Heart right ventricle (tissue), 16 donors: ENCODE measurements at regions of chr1 and their contacts with region 1.

Region 1: GRCh38 chr1:202105539-202106276 is 17.0 kb upstream of the GPR37L1 start:
- DNase-seq: peak in 1 of 2 donors; percentile 18
- ATAC-seq: no peak
- H3K4me3 ChIP-seq: no peak overlapping the region
- H3K27ac ChIP-seq: peak overlapping the region in 1 of 10 donors; percentile 90
- H3K4me1 ChIP-seq: peaks cover 0 to 31% (median 20%) of the 10 kb centered on the region in 9 donors
- H3K27me3 ChIP-seq: no peaks in the 10 kb centered on the region
- CTCF ChIP-seq: no peak

Region 2: GRCh38 chr1:201870397-201870796 is 235.3 kb before region 1 on chr1:
- intact Hi-C with region 1: no loop called
- DNase-seq: no peak
- ATAC-seq: no peak
- H3K4me3 ChIP-seq: no peak overlapping the region
- H3K27ac ChIP-seq: no peak overlapping the region
- H3K4me1 ChIP-seq: peaks cover 0 to 4% (median 0%) of the 10 kb centered on the region in 9 donors
- H3K27me3 ChIP-seq: no peaks in the 10 kb centered on the region
- CTCF ChIP-seq: no peak

Region 3: DNA sequence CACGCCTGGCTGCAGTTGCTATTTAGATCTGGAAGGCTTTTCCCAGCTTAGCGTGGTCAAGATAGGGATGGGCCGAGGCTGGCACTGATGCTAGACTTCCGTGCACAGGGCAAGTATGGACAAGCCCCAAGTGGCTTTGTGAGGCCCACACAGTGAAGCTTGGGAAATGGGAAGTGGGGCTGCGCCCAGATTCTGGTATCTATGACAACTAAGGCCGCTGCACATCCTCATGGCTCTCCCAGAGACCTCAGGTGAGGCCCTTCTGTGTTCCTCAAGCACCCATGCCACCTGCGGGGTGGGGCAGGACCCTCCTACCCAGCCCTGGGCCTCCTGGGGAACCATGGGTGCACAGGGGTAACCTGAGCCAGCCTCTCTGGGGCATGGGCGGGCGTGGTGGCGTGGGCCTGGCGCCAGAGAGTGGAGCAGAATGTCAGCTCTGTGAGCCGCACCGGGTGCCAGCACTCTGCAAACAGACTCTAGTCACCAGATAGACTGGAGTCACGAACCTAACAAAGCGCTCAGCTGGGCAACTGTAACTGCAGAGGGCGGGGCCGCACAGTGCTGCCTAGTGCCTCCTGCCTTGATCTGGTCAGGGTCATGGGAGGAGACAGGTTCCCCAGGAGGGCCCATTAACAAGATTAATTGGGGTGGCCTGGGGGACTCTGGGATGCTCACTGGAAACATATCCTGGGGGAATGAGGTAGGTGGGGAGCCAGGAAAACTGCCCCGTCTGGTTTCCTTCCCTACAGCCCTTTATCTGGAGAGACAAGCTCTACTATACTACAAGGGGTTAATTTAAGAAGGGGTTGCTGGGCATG is 48.9 kb before region 1 on chr1:
- intact Hi-C with region 1: loop called in 1 of 10 experiments (anchors 2 kb)
- DNase-seq: peak; percentile 61 to 71
- ATAC-seq: peak; percentile 63 to 96 (median 92)
- H3K4me3 ChIP-seq: no peak overlapping the region
- H3K27ac ChIP-seq: peak overlapping the region in 5 of 10 donors; percentile 15 to 48 (median 28)
- H3K4me1 ChIP-seq: peaks cover 0 to 5% (median 0%) of the 10 kb centered on the region in 9 donors
- H3K27me3 ChIP-seq: no peaks in the 10 kb centered on the region
- CTCF ChIP-seq: no peak

Region 4: DNA sequence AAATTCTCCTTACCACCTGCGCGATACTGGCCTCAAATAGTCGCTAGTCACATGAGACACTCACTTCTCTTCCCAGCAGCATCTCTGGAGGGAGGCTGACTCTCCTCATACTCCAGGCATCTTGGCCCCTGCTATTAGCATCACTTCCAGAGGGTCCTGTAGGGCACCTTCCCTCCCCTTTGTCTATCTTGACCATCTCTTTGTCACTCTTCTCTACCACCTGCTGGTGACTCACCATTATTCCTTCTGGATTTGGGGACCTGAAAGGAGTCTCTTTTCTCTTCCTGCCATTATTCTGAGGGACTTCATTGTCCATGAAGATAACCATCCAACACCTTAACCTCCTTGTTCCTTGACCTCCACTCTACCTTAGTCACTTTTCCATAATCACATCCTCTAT is 14.7 kb before region 1 on chr1:
- intact Hi-C with region 1: loop called in 1 of 10 experiments (anchors 1 kb)
- DNase-seq: no peak
- ATAC-seq: no peak
- H3K4me3 ChIP-seq: no peak overlapping the region
- H3K27ac ChIP-seq: no peak overlapping the region
- H3K4me1 ChIP-seq: peaks cover 0 to 11% (median 0%) of the 10 kb centered on the region in 9 donors
- H3K27me3 ChIP-seq: no peaks in the 10 kb centered on the region
- CTCF ChIP-seq: no peak